ENCODE measurements at regions of chr7 and their contacts with region 1.

Region 1: DNA sequence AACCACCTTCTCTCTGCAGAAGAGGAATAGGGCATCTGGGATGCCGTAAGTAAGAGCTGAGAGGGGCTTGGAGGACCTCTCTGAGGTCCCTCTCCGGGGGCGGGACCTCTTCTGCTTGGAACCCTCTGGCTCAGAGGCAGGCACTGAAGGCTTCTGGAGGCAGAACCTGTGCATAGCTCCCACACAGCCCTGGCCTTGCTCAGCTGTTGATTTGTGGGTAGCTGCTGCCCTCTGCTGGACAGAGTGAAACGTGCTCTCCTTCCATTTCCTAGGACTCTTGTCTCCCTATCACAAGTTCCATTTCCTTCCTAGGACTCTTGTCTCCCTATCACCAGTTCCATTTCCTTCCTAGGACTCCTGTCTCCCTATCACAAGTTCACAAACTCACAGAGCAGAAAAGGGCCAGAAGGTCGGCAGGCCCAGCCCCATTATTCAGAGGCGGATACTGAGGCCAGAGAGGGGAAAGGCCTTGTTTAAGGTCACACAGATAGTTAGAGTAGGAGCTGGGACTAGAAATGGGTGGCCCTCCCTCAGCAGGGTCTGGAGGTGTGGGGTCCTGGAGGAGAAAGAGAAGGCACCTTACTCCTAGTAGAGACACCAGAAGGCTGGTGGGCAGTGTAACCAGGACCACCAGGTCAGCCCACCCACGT is 30.3 kb upstream of the GARS1 start:
- DNase-seq: peak; percentile 82
- H3K4me3 Mint-ChIP-seq: no peak overlapping the region
- H3K27ac Mint-ChIP-seq: no peak overlapping the region
- H3K4me1 Mint-ChIP-seq: peaks cover 13% of the 10 kb centered on the region
- H3K27me3 Mint-ChIP-seq: no peaks in the 10 kb centered on the region

Region 2: DNA sequence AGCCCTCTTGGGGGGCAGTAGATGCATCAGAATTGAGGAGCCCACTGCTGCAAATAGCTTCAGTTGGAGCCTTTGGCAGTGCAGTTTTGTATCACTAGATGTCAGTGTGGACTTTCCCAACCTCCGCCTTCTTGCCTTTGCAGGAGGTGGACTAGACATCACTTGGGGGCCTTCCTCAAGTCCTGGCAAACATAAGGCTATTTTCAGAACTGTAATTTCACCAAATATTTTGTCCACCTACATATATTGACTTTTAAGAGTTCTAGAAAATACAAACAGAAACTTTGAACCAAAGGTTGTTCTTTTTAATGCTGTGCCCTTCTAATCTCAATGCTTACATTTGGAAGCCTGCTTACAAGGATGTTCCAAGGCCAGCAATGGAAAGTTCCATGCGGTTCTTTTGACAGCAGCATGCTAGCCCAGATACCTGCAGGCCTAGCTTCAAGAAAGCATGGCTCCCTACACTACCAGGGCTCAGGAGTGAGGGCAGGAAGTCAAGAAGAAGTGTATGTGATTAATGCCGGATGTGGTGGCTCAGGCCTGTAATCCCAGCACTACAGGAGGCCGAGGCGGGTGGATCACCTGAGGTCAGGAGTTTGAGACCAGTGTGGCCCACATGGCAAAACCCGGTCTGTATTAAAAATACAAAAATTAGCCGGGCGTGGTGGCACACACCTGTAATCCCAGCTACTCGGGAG is 288.0 kb before region 1 on chr7:
- CTCF ChIA-PET with region 1: interaction called, 37 read pairs
- POLR2A ChIA-PET with region 1: no interaction called
- DNase-seq: peak; percentile 57
- H3K4me3 Mint-ChIP-seq: no peak overlapping the region
- H3K27ac Mint-ChIP-seq: no peak overlapping the region
- H3K4me1 Mint-ChIP-seq: peaks cover 7% of the 10 kb centered on the region
- H3K27me3 Mint-ChIP-seq: no peaks in the 10 kb centered on the region

Region 3: GRCh38 chr7:30510124-30511075 is 54.0 kb before region 1 on chr7:
- CTCF ChIA-PET with region 1: interaction called, 36 read pairs
- POLR2A ChIA-PET with region 1: no interaction called
- DNase-seq: peak; percentile 40
- H3K4me3 Mint-ChIP-seq: no peak overlapping the region
- H3K27ac Mint-ChIP-seq: no peak overlapping the region
- H3K4me1 Mint-ChIP-seq: peaks cover 21% of the 10 kb centered on the region
- H3K27me3 Mint-ChIP-seq: no peaks in the 10 kb centered on the region

Region 4: GRCh38 chr7:30515761-30516160 is 48.6 kb before region 1 on chr7:
- CTCF ChIA-PET with region 1: interaction called, 36 read pairs
- POLR2A ChIA-PET with region 1: no interaction called
- DNase-seq: no peak
- H3K4me3 Mint-ChIP-seq: no peak overlapping the region
- H3K27ac Mint-ChIP-seq: no peak overlapping the region
- H3K4me1 Mint-ChIP-seq: peaks cover 8% of the 10 kb centered on the region
- H3K27me3 Mint-ChIP-seq: no peaks in the 10 kb centered on the region

Region 5: GRCh38 chr7:30548762-30549344 is 15.5 kb before region 1 on chr7:
- CTCF ChIA-PET with region 1: interaction called, 82 read pairs
- POLR2A ChIA-PET with region 1: no interaction called
- DNase-seq: peak; percentile 40
- H3K4me3 Mint-ChIP-seq: no peak overlapping the region
- H3K27ac Mint-ChIP-seq: no peak overlapping the region
- H3K4me1 Mint-ChIP-seq: peaks cover 2% of the 10 kb centered on the region
- H3K27me3 Mint-ChIP-seq: no peaks in the 10 kb centered on the region

Region 6: GRCh38 chr7:30740424-30741181 is 176.2 kb after region 1 on chr7:
- CTCF ChIA-PET with region 1: interaction called, 13 read pairs
- POLR2A ChIA-PET with region 1: no interaction called
- DNase-seq: peak; percentile 81
- H3K4me3 Mint-ChIP-seq: no peak overlapping the region
- H3K27ac Mint-ChIP-seq: no peak overlapping the region
- H3K4me1 Mint-ChIP-seq: peaks cover 33% of the 10 kb centered on the region
- H3K27me3 Mint-ChIP-seq: no peaks in the 10 kb centered on the region